Activated CD4-positive, alpha-beta memory T cell treated with anti-CD3 and anti-CD28 coated beads for 36 hours (primary cell): ENCODE measurements at regions of chr2 and their contacts with region 1.

Region 1: DNA sequence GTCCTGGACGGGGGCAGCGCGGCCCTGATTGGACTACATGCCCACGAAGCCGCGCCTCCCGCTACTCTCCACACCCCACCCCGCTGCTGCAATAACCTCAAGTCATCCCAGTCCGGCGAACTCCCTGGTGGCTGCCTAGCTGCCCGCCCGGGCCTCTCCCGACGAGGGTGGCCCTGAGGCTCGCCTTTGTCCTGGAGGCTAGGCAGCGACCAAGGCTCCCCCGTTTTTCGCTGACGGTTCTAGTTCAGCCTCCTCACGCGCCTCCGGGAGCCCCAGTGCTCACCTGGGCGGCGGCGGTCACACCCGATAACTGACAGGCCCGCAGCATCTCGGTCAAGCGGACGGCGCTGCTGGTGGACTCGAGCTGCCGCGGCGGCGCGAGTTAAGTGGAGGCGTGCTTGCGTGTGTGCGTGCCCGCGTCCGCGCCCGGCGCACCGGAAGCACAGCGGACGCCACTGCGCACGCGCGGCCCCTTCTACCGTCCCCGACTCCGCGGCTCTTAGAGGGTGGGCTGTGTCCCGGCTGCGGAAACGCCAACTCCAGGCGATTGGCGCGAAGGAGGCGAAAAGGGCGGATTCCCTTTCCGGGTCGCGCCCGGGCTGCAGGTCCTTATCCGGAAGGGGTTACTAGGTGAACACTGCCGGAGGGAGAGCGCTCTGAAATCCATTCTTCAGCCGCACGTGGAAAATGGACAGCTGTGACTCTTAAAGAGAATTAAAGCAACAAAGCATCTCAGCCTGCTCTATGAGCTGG is at the start of gene IMMT:
- DNase-seq: peak; percentile 96
- H3K4me3 Mint-ChIP-seq: peak within 1 kb of the TSS; percentile 91
- H3K27ac Mint-ChIP-seq: peak within 1 kb of the TSS; percentile 88
- H3K4me1 Mint-ChIP-seq: peaks cover 39% of the 10 kb centered on the region
- H3K27me3 Mint-ChIP-seq: no peaks in the 10 kb centered on the region
- total RNA-seq, gene IMMT: 170 to 172 TPM

Region 2: GRCh38 chr2:85852937-85853498 is 342.2 kb before region 1 on chr2:
- CTCF ChIA-PET with region 1: no interaction called
- POLR2A ChIA-PET with region 1: no interaction called
- intact Hi-C with region 1: loop called (anchors 10 kb)
- DNase-seq: peak; percentile 69
- H3K4me3 Mint-ChIP-seq: peak overlapping the region; percentile 77
- H3K27ac Mint-ChIP-seq: peak overlapping the region; percentile 98
- H3K4me1 Mint-ChIP-seq: peaks cover 71% of the 10 kb centered on the region
- H3K27me3 Mint-ChIP-seq: no peaks in the 10 kb centered on the region

Region 3: DNA sequence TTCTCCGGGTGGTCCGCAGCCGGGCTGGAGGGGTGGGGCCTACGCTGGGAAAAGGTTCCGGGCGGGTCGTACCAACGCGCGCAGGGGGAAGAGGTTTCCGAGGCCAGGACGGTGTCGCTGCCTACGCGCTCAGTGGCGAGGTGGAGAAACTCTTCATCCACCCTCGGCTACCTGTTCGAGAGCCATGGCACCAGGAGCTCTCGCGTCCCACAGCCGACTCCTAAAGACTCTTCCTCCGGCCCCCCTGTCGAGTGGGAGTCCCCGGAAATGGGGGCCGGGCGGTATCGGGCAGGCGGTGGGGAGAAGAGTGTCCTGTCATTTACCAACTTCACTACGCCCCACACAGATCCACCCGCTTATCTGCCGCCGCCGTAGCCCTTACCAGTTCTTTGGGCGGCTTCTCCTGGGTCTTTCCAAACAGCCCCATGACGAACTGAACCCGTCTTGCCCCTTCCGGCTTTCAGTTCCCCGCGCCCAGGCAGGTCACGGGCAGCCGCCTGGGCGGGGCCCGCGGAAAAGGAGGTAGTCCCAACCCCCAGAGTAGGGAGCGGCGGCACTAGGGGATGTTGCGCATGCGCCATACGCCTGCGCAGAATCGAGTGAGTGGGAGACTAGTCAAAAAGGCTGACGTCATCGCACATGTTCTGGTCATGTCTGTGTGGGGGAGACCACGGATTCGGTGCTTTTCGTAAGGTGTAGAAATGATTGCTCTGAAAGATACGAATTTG is 367.9 kb after region 1 on chr2 and contains the start of gene CHMP3:
- CTCF ChIA-PET with region 1: no interaction called
- POLR2A ChIA-PET with region 1: no interaction called
- intact Hi-C with region 1: loop called (anchors 10 kb)
- DNase-seq: peak; percentile 98
- H3K4me3 Mint-ChIP-seq: peak within 1 kb of the TSS; percentile 94
- H3K27ac Mint-ChIP-seq: peak within 1 kb of the TSS; percentile 98
- H3K4me1 Mint-ChIP-seq: peaks cover 27% of the 10 kb centered on the region
- H3K27me3 Mint-ChIP-seq: no peaks in the 10 kb centered on the region
- total RNA-seq, gene CHMP3: 36.5 to 38.6 TPM

Region 4: GRCh38 chr2:86623651-86624541 is 428.7 kb after region 1 on chr2 and contains the start of gene RNF103:
- CTCF ChIA-PET with region 1: no interaction called
- POLR2A ChIA-PET with region 1: no interaction called
- intact Hi-C with region 1: loop called (anchors 5 kb)
- DNase-seq: peak; percentile 95
- H3K4me3 Mint-ChIP-seq: peak within 1 kb of the TSS; percentile 95
- H3K27ac Mint-ChIP-seq: peak within 1 kb of the TSS; percentile 92
- H3K4me1 Mint-ChIP-seq: peaks cover 32% of the 10 kb centered on the region
- H3K27me3 Mint-ChIP-seq: peaks cover 4% of the 10 kb centered on the region
- total RNA-seq, gene RNF103: 12.3 to 13.1 TPM